ENCODE measurements at regions of chr10 and their contacts with region 1.

Region 1: DNA sequence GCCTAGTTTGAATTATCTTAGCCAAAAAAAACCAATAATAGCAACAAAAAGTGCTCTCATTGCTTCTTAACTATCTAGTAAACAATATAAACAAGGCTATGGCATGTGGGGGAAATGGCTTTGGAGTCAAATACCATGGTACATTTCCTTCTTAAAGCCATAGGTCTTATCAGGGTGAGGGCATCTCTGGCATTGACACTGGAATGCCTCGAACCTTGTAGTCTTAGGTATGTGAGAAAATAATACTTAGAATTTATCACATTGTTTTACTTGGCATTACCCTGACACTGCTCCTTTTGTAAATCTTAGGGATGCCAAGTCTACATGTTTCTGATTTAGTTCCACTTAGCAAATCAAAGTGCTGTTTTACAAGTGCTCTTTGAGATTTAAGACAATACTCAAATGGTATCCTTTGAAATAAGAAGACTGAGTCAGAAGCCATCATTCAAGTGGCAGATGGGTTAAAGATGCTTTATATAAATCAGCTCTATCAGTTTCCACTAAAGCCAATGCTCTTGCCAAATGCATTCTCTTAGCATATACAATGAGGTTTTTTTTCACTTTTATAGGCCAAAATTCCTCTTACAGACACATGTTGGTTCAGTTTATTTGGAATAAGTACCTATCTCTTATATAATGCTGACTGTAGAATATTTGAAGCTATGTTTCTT is 155.2 kb downstream of the HPSE2 start:
- DNase-seq: no peak
- ATAC-seq: no peak

Region 2: GRCh38 chr10:99125879-99126278 is 45.5 kb after region 1 on chr10:
- intact Hi-C with region 1: loop called (anchors 2 kb)
- DNase-seq: no peak
- ATAC-seq: no peak